GM10248 (cell line): ENCODE measurements at regions of chr11 and their contacts with region 1.

Region 1: DNA sequence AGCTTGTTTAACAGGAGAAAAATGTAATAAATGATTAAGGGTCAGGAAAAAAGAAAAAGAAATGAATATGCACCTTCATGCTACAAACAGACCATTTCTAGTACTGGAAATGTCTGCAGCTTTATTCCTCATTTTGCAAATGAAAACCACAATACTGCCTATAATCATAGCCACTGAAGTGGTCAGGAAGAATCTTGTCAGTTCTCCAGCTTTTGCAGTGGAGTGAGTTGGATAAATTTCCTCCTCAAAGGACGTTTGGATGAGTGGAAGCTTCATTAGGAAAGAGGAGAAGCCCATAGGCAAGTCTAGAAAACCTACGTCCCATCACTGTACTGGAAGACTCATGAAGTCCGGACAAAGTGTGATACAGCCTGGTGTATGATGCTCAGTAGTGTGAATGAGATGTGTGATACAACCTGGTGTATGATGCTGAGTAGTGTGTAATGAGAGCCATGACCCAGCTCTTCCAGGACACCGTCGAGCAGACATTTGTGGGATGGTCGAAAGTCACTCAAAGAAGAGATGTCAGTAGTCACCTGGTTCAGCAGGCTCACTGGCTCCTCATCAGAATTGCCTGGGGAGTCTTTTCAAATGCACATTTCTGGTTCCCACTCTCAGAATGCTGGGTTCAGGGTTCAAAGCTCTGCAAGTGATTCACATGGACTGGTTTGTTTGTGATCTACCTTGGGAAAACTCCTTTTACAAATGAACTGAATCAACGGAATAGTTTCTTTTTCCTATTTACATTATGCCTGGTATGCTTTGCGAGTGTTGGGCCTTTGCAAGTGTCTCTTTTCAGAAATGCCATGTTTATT is 101.3 kb downstream of the PDHX start:
- DNase-seq: no peak
- CTCF ChIP-seq: no peak

Region 2: DNA sequence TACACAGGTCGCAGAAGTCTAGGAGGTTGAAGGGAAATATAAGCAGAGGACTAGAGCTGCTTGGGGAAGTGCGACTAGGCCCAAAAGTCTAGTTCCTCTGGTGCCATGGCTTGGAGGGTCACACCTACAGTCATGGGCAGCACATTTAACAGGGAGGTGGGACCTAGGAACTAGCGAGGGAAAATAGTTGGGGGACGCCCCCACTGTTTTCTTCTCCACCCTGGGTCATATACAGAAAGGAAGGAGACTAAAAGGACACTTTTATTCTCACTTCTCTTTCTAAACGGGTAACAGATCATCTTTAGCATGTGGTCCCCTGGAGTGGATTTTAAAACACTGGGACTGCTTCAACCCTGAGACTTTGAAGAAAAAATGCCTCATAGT is 118.1 kb before region 1 on chr11:
- CTCF ChIA-PET with region 1: no interaction called
- POLR2A ChIA-PET with region 1: no interaction called
- DNase-seq: no peak
- CTCF ChIP-seq: no peak

Region 3: GRCh38 chr11:34948696-34949095 is 69.0 kb before region 1 on chr11:
- CTCF ChIA-PET with region 1: no interaction called
- POLR2A ChIA-PET with region 1: no interaction called
- DNase-seq: no peak
- CTCF ChIP-seq: no peak

Region 4: DNA sequence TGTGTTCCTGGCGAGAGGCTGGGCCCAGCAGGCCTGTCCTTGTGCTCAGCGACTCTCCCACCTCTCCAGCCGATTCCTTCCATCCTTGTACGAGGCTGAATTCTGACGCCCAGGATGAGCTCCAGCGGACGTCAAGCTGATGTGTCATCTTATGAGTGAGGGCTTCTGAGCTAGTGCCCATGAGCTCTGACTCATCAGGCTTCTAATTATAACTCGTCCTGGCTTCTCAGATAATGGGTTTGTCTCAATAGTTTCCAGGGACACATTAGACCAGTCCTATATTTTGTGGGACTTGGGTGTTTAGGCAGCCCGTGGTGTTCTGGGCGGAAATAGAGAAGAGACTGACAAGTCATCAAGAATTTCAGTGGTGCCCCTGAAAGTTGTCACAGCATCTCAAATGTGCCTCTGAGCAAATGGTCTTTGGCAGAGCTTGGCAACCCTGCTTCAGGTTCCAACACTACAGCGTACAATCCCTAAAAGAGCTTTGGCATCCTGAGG is 13.0 kb after region 1 on chr11:
- CTCF ChIA-PET with region 1: interaction called, 22 read pairs
- POLR2A ChIA-PET with region 1: no interaction called
- DNase-seq: no peak
- CTCF ChIP-seq: no peak